ENCODE measurements at regions of chr1 and their contacts with region 1.

Region 1: DNA sequence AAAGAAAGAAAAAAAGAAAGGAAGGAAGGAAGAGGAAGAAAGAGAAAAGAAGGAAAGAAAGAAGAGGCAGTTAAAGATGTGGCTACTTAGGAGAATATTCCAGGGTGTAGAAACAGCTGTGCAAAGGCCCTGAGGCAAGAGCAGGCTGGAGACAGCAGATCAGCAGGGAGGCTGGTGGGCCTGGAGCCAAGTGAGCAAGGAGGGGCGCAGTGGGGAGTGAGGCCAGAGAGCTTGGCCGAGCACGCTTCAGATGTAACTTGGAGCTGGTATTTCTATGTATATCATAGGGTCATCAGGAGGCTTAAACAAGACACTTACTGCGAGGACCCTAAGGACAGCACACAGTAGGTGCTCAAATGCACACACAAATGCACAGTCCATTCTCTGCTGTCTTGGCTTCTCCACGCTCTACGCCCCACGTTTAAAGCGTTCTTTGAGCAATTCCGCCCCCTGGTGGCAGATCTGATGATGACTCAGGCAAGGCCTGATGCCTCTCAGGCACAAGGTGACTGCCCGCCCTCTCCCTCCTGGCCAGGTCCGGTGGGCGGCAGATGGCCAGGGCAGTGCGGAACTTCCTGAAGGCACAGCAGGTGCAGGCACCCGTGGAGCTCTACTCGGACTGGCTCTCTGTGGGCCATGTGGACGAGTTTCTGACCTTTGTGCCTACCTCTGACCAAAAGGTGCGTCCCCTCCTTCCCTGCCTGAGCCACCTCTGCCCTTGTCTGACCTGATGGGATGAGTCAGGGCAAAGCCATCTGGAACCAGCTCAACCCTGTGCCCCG is 11.9 kb upstream of the PADI3 start:
- DNase-seq: peak; percentile 91 to 92
- H3K4me3 ChIP-seq: no peak overlapping the region
- H3K27ac ChIP-seq: no peak overlapping the region
- H3K4me1 ChIP-seq: peaks cover 0 to 13% (median 7%) of the 10 kb centered on the region in 4 donors
- H3K27me3 ChIP-seq: peaks cover 0 to 40% (median 0%) of the 10 kb centered on the region in 3 donors
- CTCF ChIP-seq: peak in 6 of 7 experiments; percentile 48 to 95 (median 88)
- EP300 ChIP-seq: no peak
- POLR2A ChIP-seq: no peak

Region 2: DNA sequence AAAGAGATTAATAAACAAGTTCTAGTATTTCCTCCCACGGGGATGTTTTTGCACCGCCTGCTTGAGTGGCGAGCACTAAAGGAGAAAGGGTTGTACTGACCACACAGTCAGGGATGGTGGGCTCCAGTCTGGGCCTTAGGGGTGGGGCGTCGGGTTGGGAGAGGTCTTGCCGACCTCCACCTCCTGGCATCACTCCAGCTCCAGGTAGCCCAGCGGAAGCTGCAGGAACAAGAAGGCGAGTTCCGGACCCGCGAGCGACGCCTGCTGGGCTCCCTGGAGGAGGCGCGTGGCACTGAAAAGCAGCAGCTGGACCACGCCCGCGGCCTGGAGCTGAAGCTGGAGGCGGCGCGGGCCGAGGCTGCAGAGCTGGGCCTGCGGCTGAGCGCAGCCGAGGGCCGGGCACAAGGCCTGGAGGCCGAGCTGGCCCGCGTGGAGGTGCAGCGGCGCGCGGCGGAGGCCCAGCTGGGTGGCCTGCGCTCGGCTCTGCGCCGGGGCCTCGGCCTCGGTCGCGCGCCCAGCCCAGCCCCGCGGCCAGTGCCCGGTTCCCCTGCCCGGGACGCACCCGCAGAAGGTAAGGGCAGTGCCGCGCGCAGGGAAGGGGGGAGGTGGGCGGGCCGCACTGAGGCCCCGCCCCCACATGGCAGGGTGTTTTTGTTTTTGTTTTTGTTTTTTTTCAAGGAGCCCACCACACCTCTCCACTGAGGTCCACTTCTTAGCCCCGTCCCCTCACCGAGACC is 276.2 kb before region 1 on chr1:
- intact Hi-C with region 1: loop called (anchors 10 kb)
- DNase-seq: peak; percentile 92 to 94
- H3K4me3 ChIP-seq: peak overlapping the region; percentile 44 to 49 (median 46)
- H3K27ac ChIP-seq: peak overlapping the region; percentile 11 to 84 (median 62)
- H3K4me1 ChIP-seq: peaks cover 0 to 23% (median 19%) of the 10 kb centered on the region in 4 donors
- H3K27me3 ChIP-seq: no peaks in the 10 kb centered on the region
- CTCF ChIP-seq: peak in 5 of 7 experiments; percentile 61 to 75 (median 73)
- EP300 ChIP-seq: no peak
- POLR2A ChIP-seq: no peak

Region 3: GRCh38 chr1:17059739-17060460 is 177.1 kb before region 1 on chr1:
- intact Hi-C with region 1: loop called (anchors 5 kb)
- DNase-seq: peak; percentile 78 to 88
- H3K4me3 ChIP-seq: no peak overlapping the region
- H3K27ac ChIP-seq: peak overlapping the region in 2 of 5 donors; percentile 33 to 34
- H3K4me1 ChIP-seq: peaks cover 0 to 27% (median 4%) of the 10 kb centered on the region in 4 donors
- H3K27me3 ChIP-seq: no peaks in the 10 kb centered on the region
- CTCF ChIP-seq: peak in 5 of 7 experiments; percentile 51 to 64 (median 61)
- EP300 ChIP-seq: no peak
- POLR2A ChIP-seq: no peak

Region 4: GRCh38 chr1:17119773-17120480 is 117.0 kb before region 1 on chr1:
- intact Hi-C with region 1: loop called (anchors 5 kb)
- DNase-seq: no peak
- H3K4me3 ChIP-seq: peak overlapping the region in 3 of 4 donors; percentile 41 to 51 (median 50)
- H3K27ac ChIP-seq: peak overlapping the region in 3 of 5 donors; percentile 26 to 82 (median 50)
- H3K4me1 ChIP-seq: peaks cover 11 to 48% (median 30%) of the 10 kb centered on the region in 4 donors
- H3K27me3 ChIP-seq: peaks cover 0 to 57% (median 31%) of the 10 kb centered on the region in 3 donors
- CTCF ChIP-seq: no peak
- EP300 ChIP-seq: no peak
- POLR2A ChIP-seq: no peak

Region 5: DNA sequence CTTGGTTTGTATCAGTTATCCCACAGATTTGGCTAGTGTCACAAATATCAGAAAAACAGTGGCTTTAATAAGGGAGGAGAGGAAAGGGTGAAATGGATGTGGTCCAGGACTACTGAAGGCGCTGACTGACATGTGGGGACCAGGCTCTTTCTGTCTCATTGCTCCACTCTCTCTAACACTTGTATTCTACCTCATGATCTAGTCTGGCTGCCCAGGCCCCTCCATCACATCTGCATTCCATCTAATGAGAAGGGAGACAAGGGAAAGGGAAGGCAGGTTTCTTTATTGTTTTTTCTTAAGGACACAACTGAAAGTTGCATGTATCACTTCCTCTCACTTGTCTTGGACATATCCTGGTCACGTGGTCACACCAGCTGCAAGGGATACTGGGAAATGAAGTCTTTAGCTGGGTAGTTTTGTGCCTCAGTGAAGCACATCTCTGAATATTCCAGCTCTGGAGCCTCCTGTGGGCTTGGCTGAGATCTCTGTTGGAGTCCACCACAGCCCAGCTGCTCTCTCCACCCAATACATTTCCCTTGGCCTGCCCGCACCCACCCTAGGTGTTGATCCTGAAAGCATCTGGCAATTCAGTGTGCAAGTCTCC is 75.7 kb before region 1 on chr1:
- intact Hi-C with region 1: no loop called
- DNase-seq: no peak
- H3K4me3 ChIP-seq: no peak overlapping the region
- H3K27ac ChIP-seq: no peak overlapping the region
- H3K4me1 ChIP-seq: no peaks in the 10 kb centered on the region
- H3K27me3 ChIP-seq: peaks cover 0 to 24% (median 0%) of the 10 kb centered on the region in 3 donors
- CTCF ChIP-seq: no peak
- EP300 ChIP-seq: no peak
- POLR2A ChIP-seq: no peak